Activated CD8-positive, alpha-beta T cell treated with anti-CD3 and anti-CD28 coated beads, Interleukin-2, amount 10 ng/mL, durations not matched to agents 7 days and 5 days (primary cell): ENCODE measurements at regions of chr5 and their contacts with region 1.

Region 1: GRCh38 chr5:138065102-138065501 is 18.7 kb upstream of the WNT8A start:
- DNase-seq: no peak
- ATAC-seq: no peak
- H3K4me3 Mint-ChIP-seq: no peak overlapping the region
- H3K27ac Mint-ChIP-seq: no peak overlapping the region
- H3K4me1 Mint-ChIP-seq: peaks cover 4% of the 10 kb centered on the region
- H3K27me3 Mint-ChIP-seq: no peaks in the 10 kb centered on the region

Region 2: GRCh38 chr5:137344723-137345322 is 720.3 kb before region 1 on chr5:
- CTCF ChIA-PET with region 1: no interaction called
- POLR2A ChIA-PET with region 1: no interaction called
- DNase-seq: peak; percentile 36
- ATAC-seq: no peak
- H3K4me3 Mint-ChIP-seq: no peak overlapping the region
- H3K27ac Mint-ChIP-seq: no peak overlapping the region
- H3K4me1 Mint-ChIP-seq: no peaks in the 10 kb centered on the region
- H3K27me3 Mint-ChIP-seq: no peaks in the 10 kb centered on the region

Region 3: GRCh38 chr5:137778772-137779564 is 286.1 kb before region 1 on chr5:
- CTCF ChIA-PET with region 1: interaction called, 48 read pairs
- POLR2A ChIA-PET with region 1: no interaction called
- DNase-seq: no peak
- ATAC-seq: no peak
- H3K4me3 Mint-ChIP-seq: no peak overlapping the region
- H3K27ac Mint-ChIP-seq: no peak overlapping the region
- H3K4me1 Mint-ChIP-seq: no peaks in the 10 kb centered on the region
- H3K27me3 Mint-ChIP-seq: no peaks in the 10 kb centered on the region

Region 4: GRCh38 chr5:138028971-138029365 is 36.1 kb before region 1 on chr5:
- CTCF ChIA-PET with region 1: interaction called, 235 read pairs
- POLR2A ChIA-PET with region 1: no interaction called
- DNase-seq: no peak
- ATAC-seq: no peak
- H3K4me3 Mint-ChIP-seq: no peak overlapping the region
- H3K27ac Mint-ChIP-seq: peak overlapping the region; percentile 10
- H3K4me1 Mint-ChIP-seq: peaks cover 65% of the 10 kb centered on the region
- H3K27me3 Mint-ChIP-seq: no peaks in the 10 kb centered on the region

Region 5: GRCh38 chr5:138077065-138077696 is 12.1 kb after region 1 on chr5:
- CTCF ChIA-PET with region 1: interaction called, 18 read pairs
- POLR2A ChIA-PET with region 1: no interaction called
- DNase-seq: peak; percentile 60
- ATAC-seq: no peak
- H3K4me3 Mint-ChIP-seq: no peak overlapping the region
- H3K27ac Mint-ChIP-seq: no peak overlapping the region
- H3K4me1 Mint-ChIP-seq: peaks cover 12% of the 10 kb centered on the region
- H3K27me3 Mint-ChIP-seq: no peaks in the 10 kb centered on the region

Region 6: GRCh38 chr5:138128334-138128733 is 63.2 kb after region 1 on chr5:
- CTCF ChIA-PET with region 1: interaction called, 14 read pairs
- POLR2A ChIA-PET with region 1: no interaction called
- DNase-seq: no peak
- ATAC-seq: no peak
- H3K4me3 Mint-ChIP-seq: no peak overlapping the region
- H3K27ac Mint-ChIP-seq: no peak overlapping the region
- H3K4me1 Mint-ChIP-seq: no peaks in the 10 kb centered on the region
- H3K27me3 Mint-ChIP-seq: peaks cover 14% of the 10 kb centered on the region